HAP-1 (cell line): ENCODE measurements at regions of chr2 and their contacts with region 1.

Region 1: GRCh38 chr2:36355151-36355889 is at the start of gene CRIM1:
- DNase-seq: peak; percentile 77 to 93
- H3K4me3 ChIP-seq: peak within 1 kb of the TSS; percentile 61
- H3K4me1 ChIP-seq: peaks cover 15% of the 10 kb centered on the region
- H3K27me3 ChIP-seq: no peaks in the 10 kb centered on the region

Region 2: DNA sequence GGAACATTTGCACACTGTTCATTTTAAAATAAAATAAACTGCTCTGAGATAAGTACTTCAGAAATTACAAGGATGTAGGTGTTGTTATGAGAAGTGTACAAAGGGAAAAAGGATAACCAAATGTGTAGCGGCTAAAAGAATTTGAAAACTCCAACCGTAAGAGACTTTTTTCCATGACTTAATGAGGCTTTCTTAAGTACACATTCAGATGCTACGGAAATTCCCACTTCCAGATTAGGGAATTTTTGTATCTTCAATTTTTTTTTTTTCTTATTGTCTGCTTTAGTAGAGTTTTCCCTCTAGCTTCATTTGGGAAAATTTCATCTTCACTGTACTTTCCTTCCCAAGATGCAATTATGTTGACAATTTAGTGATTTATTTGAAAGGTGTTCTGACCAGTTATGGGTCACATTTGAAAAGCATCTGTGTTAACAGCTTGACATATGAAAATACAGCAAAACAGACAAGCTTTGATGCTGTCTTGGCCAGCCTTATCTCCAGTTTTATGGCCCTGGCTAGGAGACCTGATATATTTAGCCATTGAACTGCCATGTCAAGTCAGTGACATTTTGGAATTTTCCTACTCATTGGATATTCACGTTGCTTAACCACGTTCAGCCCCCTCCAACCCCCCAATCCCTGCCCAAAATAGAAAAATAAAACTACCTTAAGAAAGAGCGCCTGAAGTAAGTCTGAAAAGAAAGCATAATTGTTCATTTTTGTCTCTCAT is 137.1 kb after region 1 on chr2:
- in situ Hi-C with region 1: loop called (anchors 10 kb)
- DNase-seq: no peak
- H3K4me3 ChIP-seq: no peak overlapping the region
- H3K4me1 ChIP-seq: peaks cover 12% of the 10 kb centered on the region
- H3K27me3 ChIP-seq: no peaks in the 10 kb centered on the region

Region 3: DNA sequence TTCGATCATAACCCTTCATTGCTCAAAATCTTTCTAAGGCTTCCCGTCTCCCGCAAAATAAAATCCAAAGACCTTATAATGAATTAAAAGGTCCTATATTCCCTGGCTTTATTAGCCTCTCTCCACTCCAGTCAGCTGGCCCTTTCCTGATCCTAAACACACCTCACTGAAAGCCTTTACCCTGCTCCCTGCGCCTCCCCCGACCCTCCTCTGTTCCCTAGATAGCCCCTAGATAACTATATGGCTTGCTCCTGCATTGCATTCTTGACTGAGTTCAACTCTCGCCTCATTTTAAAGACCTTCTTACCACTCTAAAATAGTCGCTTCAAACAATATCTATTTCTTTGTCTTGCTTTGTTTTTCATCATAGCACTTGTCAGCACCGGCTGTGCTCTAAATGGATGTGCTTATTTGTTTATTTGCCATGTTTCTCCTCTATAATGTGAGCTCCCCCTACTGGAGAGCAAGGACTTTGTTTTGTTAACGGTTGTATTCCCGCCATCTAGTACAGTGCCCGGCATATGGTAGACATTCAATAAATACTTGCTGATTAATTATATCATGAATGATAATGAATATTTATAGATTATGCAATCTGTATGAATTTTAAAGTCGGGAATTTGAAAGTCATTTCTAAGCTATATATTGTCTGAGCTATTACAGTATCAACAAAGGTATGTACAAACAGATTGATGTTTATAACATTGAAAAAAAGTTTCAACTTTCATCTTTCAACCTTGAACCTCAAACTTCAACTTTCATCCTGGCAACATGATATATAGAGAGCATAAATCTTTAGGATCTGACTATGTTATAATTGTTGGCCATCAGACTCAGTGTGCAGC is 308.8 kb after region 1 on chr2:
- in situ Hi-C with region 1: loop called (anchors 10 kb)
- DNase-seq: peak; percentile 48 to 80
- H3K4me3 ChIP-seq: no peak overlapping the region
- H3K4me1 ChIP-seq: peaks cover 10% of the 10 kb centered on the region
- H3K27me3 ChIP-seq: no peaks in the 10 kb centered on the region

Region 4: GRCh38 chr2:36785179-36785795 is 430.0 kb after region 1 on chr2:
- in situ Hi-C with region 1: loop called (anchors 10 kb)
- DNase-seq: peak; percentile 48 to 74
- H3K4me3 ChIP-seq: no peak overlapping the region
- H3K4me1 ChIP-seq: peaks cover 2% of the 10 kb centered on the region; the same call in 1 of the 2 replicates
- H3K27me3 ChIP-seq: no peaks in the 10 kb centered on the region

Region 5: DNA sequence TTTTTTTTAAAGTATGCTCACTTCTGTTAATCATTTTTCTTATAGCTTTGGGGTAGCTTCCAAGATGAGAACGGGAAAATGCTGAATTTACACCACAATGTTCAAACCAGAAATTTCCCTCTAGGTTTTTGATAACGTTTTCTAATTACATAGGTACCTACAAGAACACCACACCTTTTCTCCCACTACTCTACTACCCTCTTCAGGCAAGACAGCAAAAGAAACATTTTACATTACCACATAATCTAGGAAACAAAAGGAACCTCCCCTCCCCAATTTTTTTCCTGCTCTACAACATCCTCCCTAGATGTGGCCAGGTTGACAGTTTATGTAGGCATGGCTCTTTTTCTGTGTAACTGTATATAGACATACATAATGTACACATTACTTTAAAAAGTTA is 908.5 kb after region 1 on chr2:
- in situ Hi-C with region 1: no loop called
- DNase-seq: no peak
- H3K4me3 ChIP-seq: no peak overlapping the region
- H3K4me1 ChIP-seq: no peaks in the 10 kb centered on the region
- H3K27me3 ChIP-seq: no peaks in the 10 kb centered on the region